Left ventricle myocardium superior (tissue), 1 donor: ENCODE measurements at regions of chr13 and their contacts with region 1.

Region 1: GRCh38 chr13:36858290-36858689 is 39.3 kb downstream of the RFXAP start:
- DNase-seq: no peak
- ATAC-seq: peak; percentile 57

Region 2: GRCh38 chr13:36362251-36362650 is 496.0 kb before region 1 on chr13:
- intact Hi-C with region 1: no loop called
- DNase-seq: no peak
- ATAC-seq: peak; percentile 66

Region 3: DNA sequence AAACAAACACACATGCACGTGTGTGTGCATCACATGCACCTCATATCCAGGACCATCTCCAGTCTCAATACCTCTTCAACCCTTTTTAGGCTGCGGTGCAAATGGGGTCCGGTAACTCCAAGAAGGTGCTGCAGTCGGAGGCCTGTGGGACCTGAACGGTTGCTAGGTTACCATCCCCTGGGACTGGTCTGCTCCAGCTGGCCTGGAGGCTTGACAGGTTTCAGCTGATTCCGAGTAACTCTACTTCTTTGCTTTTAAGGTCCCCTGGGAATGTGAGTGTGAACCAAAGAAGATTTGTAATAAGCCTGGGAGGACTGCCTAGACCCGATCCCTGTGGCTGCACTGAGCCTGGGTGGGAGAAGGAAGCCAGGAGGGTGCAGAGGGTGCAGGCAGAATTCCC is 308.5 kb before region 1 on chr13:
- intact Hi-C with region 1: no loop called
- DNase-seq: no peak
- ATAC-seq: peak; percentile 37

Region 4: DNA sequence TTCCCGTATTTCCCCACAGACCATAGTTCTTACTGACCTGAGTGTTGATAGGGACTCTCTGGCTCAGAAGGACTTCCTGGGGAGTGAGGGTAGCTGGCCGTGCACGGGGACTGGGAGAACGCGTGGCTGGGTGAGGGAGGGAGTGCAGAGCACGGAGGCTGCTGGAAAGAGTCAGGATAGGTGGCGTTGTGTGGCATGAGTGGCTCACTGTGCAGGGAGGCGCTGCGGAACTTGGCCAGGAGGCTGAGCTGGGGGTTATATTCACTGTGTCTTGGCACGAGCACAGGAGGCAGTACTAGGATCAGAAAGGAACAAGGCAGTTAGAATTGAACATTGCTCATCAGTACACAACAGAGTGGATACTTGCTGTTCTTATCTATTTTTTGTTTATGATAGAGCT is 14.3 kb after region 1 on chr13:
- intact Hi-C with region 1: no loop called
- DNase-seq: peak; percentile 44
- ATAC-seq: peak; percentile 89

Region 5: GRCh38 chr13:36981156-36981743 is 123.0 kb after region 1 on chr13:
- intact Hi-C with region 1: loop called (anchors 10 kb)
- DNase-seq: no peak
- ATAC-seq: no peak

Region 6: GRCh38 chr13:37375724-37376123 is 517.4 kb after region 1 on chr13:
- intact Hi-C with region 1: no loop called
- DNase-seq: no peak
- ATAC-seq: no peak